AG04450 (cell line): ENCODE measurements at regions of chr22 and their contacts with region 1.

Region 1: DNA sequence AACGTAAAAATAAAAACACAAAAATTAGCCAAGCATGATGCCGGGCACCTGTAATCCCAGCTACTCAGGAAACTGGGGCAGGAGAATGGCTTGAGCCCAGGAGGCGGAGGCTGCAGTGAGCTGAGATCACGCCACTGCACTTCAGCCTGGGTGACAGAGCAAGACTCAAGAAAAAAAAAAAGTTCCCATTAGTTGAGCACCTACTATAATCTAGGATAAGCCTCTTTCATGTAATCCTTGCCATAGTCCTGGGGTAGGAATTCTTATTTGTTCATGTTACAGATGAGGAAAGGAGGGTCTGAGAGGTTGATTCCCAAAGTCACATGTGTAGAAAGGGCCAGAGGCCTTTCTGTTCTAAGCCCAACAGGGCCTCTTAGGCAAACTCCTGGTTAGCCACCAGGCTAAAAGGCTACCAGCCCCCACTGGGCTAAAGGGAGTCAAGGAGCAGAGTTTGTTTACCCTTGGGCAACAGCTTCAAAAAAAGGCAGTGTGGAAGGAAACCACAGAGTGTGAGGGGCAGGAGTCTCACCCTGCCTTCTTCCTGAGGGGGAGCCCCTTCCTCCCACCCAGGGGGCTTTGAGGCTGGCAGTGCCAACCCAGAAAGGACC is 21.6 kb upstream of the CSNK1E start:
- DNase-seq: no peak
- H3K4me3 ChIP-seq: no peak overlapping the region
- H3K27ac ChIP-seq: no peak overlapping the region
- H3K27me3 ChIP-seq: no peaks in the 10 kb centered on the region
- CTCF ChIP-seq: no peak

Region 2: GRCh38 chr22:38312256-38312800 is 26.5 kb before region 1 on chr22:
- CTCF ChIA-PET with region 1: no interaction called
- POLR2A ChIA-PET with region 1: interaction called, 11 read pairs
- DNase-seq: no peak
- H3K4me3 ChIP-seq: peak overlapping the region; percentile 79
- H3K27ac ChIP-seq: peak overlapping the region; percentile 97
- H3K27me3 ChIP-seq: no peaks in the 10 kb centered on the region
- CTCF ChIP-seq: no peak